Activated T-helper 1 cell treated with anti-CD3 and anti-CD28 coated beads, Interleukin-12 subunit alpha, Interleukin-12 subunit beta, Interleukin-2, Interleukin-4 antibody, amounts not matched to agents 30 ng/mL and 10 ng/mL and 1 ng/mL, durations not matched to agents 14 hours and 24 hours and 36 hours (primary cell): ENCODE measurements at regions of chr11 and their contacts with region 1.

Region 1: DNA sequence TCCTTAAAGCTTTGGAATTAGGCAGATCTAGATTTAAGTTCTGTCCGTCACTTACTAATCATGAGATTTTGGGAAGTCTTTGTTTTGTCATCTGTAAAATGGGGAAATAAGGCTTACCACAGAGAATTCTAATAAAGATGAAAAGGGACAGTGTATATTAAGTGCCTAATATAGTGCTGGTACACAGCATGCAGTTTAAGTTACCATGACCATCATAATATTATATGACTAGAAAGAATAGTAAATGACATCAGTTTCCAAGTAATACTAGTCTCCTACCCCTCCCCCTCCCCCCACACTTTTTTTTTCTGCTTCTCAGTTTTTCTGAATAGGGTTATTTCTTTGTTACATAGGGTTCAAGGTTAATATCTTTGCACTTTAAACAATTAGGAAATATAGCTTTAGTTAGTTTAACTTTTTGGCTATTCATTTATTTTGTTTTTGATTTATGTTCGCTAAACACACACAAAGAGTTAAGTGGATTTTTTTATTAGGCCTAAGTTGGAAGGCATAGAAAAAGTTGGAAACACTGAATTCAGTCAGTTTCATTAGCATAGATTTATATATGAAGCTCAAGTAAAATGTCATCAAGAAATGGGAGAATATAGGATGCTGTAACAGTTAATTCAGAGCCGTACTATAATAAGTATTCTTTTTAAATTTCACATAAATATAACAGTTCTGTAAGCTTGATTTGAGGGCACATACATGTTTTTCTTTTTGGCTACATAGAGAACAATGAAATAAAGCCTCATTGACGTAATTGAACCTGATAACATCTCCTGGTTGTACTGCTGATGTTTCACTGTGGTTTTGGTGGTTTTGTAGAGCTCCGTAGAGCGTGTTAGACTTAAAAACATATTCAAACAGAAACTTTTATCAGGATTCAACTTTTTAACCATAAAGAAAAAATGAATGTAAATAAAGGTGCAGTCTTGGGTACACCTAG is 121.2 kb downstream of the PDE3B start:
- DNase-seq: peak; percentile 60
- H3K4me3 Mint-ChIP-seq: no peak overlapping the region
- H3K27ac Mint-ChIP-seq: no peak overlapping the region
- H3K4me1 Mint-ChIP-seq: peaks cover 41% of the 10 kb centered on the region
- H3K27me3 Mint-ChIP-seq: no peaks in the 10 kb centered on the region

Region 2: DNA sequence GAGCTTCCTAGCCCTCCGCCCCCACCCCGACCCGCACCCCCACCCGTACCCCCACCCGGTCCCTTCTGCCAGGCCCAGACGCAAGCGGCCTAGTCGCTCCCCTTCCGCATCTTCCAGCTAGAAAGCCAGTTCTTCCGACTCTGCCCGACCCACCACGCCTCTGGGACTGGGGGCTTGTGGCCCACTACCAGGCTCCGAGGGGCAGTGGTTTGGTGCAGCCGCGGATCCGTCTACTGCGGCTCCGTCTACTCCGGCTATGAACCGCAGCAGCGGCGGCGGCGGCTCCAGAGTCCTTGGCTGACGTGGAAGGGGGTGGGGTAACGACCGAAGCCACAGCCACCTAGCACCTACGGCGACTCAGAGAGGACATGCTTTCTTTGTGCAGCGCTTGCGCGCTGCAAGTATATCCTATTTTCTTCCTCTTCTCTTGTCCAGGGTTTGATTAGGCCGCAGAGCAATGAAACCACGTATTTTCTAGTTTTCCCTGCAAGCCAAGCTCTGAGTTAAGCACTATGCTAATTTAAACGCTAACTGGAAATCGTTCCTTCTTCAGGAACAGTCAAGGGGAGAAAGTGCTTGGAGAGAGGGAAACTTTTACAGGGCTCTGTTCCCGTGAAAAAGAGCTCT is 265.2 kb before region 1 on chr11 and contains the start of gene COPB1:
- intact Hi-C with region 1: loop called (anchors 1 kb)
- DNase-seq: peak; percentile 90
- H3K4me3 Mint-ChIP-seq: peak within 1 kb of the TSS; percentile 100
- H3K27ac Mint-ChIP-seq: peak within 1 kb of the TSS; percentile 98
- H3K4me1 Mint-ChIP-seq: peaks cover 49% of the 10 kb centered on the region
- H3K27me3 Mint-ChIP-seq: no peaks in the 10 kb centered on the region
- total RNA-seq, gene COPB1: 94.8 and 101 TPM in 2 replicates

Region 3: GRCh38 chr11:14537134-14537599 is 227.7 kb before region 1 on chr11:
- intact Hi-C with region 1: loop called (anchors 1 kb)
- DNase-seq: peak; percentile 12
- H3K4me3 Mint-ChIP-seq: peak overlapping the region; percentile 74
- H3K27ac Mint-ChIP-seq: peak overlapping the region; percentile 89
- H3K4me1 Mint-ChIP-seq: peaks cover 48% of the 10 kb centered on the region
- H3K27me3 Mint-ChIP-seq: no peaks in the 10 kb centered on the region

Region 4: GRCh38 chr11:14544611-14545010 is 220.2 kb before region 1 on chr11:
- intact Hi-C with region 1: loop called (anchors 1 kb)
- DNase-seq: no peak
- H3K4me3 Mint-ChIP-seq: peak overlapping the region; percentile 45
- H3K27ac Mint-ChIP-seq: peak overlapping the region; percentile 91
- H3K4me1 Mint-ChIP-seq: peaks cover 73% of the 10 kb centered on the region
- H3K27me3 Mint-ChIP-seq: no peaks in the 10 kb centered on the region

Region 5: GRCh38 chr11:14698771-14699170 is 66.1 kb before region 1 on chr11:
- intact Hi-C with region 1: loop called (anchors 5 kb)
- DNase-seq: no peak
- H3K4me3 Mint-ChIP-seq: no peak overlapping the region
- H3K27ac Mint-ChIP-seq: no peak overlapping the region
- H3K4me1 Mint-ChIP-seq: peaks cover 38% of the 10 kb centered on the region
- H3K27me3 Mint-ChIP-seq: no peaks in the 10 kb centered on the region

Region 6: DNA sequence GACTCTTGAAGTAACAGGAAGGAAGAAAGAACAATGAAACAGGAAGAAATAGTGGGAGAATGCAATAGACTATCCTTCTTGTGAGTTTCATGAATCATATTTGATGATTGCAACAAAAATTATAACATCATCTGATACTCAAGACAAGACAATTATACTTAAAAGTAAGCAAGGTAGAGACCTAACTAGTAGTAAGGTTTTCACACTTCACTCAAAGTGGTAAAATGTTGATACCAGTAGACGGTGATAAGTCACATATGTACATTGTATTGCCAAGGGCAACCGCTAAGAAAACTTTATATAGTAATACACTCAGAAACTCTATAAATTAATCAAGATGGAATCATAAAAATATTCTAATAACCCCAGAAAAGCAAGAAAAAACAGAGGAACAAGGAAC is 19.4 kb after region 1 on chr11:
- intact Hi-C with region 1: loop called (anchors 1 kb)
- DNase-seq: no peak
- H3K4me3 Mint-ChIP-seq: no peak overlapping the region
- H3K27ac Mint-ChIP-seq: peak overlapping the region; percentile 85
- H3K4me1 Mint-ChIP-seq: peaks cover 55% of the 10 kb centered on the region
- H3K27me3 Mint-ChIP-seq: no peaks in the 10 kb centered on the region